CD4-positive, alpha-beta T cell (primary cell): ENCODE measurements at regions of chr12 and their contacts with region 1.

Region 1: DNA sequence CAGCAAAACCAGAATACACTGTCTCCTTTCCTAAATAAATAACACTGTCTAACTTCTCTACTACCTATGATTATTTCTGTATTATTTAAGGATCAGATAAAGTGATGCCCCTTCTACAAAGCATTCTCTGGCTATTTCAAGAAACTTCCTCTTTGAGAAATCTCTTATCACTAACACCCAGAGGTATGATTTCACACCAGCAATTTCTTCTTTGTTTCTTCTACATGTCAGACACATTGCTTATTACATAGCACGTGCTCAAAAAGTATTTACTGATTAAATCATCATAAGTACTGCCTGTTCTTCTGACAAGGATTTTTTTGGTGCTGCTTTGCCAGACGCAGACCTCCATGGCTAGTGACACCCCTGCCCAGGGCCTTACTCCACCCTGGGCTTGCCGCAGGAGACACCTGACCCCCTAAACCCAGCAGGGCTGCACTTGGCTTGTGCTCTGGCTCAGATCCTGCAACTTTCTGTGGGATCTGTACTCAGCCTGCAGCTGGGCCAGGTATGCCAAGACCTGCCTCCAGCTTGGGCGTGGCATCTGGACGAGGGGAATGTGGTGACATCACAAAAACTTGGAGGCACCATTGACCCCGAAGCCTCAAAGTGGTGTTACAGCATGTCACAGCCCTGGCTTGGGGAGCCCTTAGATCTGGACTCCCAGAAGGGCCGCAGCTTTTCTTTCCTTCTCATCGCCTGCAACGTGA is 15.4 kb upstream of the HIGD1C start:
- DNase-seq: no peak
- ATAC-seq: no peak
- H3K4me3 ChIP-seq: no peak overlapping the region
- H3K4me3 Mint-ChIP-seq: no peak overlapping the region
- H3K27ac ChIP-seq: no peak overlapping the region
- H3K27ac Mint-ChIP-seq: no peak overlapping the region
- H3K4me1 ChIP-seq: no peaks in the 10 kb centered on the region
- H3K4me1 Mint-ChIP-seq: no peaks in the 10 kb centered on the region
- H3K27me3 ChIP-seq: no peaks in the 10 kb centered on the region
- H3K27me3 Mint-ChIP-seq: no peaks in the 10 kb centered on the region
- CTCF ChIP-seq: no peak

Region 2: DNA sequence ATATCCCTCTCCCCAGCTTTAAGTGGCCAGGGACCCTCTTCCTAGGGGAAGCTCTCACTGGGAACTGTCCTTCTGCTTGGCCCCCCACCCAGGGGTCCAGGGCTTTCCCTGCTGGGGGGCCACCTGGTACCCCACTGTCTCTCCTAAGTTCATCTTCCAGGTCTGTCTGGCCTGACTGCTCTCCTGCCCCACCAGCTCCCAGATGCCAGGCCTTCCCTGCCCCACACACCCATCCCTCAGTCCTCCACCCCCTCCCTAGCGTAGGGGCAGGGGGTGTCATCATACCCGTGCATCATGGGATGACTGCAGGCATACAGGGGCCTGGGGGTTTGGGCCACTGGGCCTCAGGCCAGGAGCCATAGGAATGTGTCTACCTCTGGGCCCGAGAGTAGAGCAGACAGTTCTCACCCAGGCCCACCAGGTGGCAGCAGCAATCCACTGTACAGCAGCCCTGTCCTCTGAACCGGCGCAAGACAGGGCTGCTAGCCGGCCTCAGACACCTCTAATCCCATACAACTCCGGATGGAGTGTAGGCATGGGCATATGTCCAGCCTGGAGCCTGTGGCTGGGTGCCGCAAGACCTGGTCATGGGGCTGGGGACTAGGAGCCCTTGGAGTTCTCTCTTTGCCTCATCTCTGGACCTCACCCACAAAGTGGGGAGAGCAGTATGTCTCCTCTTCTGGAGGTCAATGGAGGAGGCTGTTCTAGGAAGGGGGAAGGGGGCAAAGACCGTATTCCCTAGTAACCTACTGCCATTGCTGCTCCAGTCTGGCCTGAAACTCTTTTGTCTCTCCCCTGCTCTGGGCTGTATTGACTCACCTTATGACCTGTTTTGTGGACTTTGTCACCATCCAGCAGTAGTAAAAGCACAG is 861.8 kb before region 1 on chr12:
- CTCF ChIA-PET with region 1: no interaction called
- POLR2A ChIA-PET with region 1: no interaction called
- intact Hi-C with region 1: no loop called
- DNase-seq: peak; percentile 63 to 88 (median 77)
- ATAC-seq: peak; percentile 95
- H3K4me3 ChIP-seq: no peak overlapping the region
- H3K4me3 Mint-ChIP-seq: no peak overlapping the region
- H3K27ac ChIP-seq: no peak overlapping the region
- H3K27ac Mint-ChIP-seq: no peak overlapping the region
- H3K4me1 ChIP-seq: peaks cover 13% of the 10 kb centered on the region
- H3K4me1 Mint-ChIP-seq: peaks cover 7% of the 10 kb centered on the region
- H3K27me3 ChIP-seq: no peaks in the 10 kb centered on the region
- H3K27me3 Mint-ChIP-seq: peaks cover 5% of the 10 kb centered on the region
- CTCF ChIP-seq: peak; percentile 82

Region 3: GRCh38 chr12:50625029-50625925 is 311.7 kb before region 1 on chr12:
- CTCF ChIA-PET with region 1: no interaction called
- POLR2A ChIA-PET with region 1: no interaction called
- intact Hi-C with region 1: no loop called
- DNase-seq: peak in 1 of 14 experiments; percentile 49
- ATAC-seq: peak; percentile 83
- H3K4me3 ChIP-seq: no peak overlapping the region
- H3K4me3 Mint-ChIP-seq: peak overlapping the region; percentile 26
- H3K27ac ChIP-seq: peak overlapping the region in 1 of 2 donors; percentile 2
- H3K27ac Mint-ChIP-seq: peak overlapping the region; percentile 50
- H3K4me1 ChIP-seq: peaks cover 30% of the 10 kb centered on the region
- H3K4me1 Mint-ChIP-seq: peaks cover 59% of the 10 kb centered on the region
- H3K27me3 ChIP-seq: no peaks in the 10 kb centered on the region
- H3K27me3 Mint-ChIP-seq: no peaks in the 10 kb centered on the region
- CTCF ChIP-seq: no peak

Region 4: DNA sequence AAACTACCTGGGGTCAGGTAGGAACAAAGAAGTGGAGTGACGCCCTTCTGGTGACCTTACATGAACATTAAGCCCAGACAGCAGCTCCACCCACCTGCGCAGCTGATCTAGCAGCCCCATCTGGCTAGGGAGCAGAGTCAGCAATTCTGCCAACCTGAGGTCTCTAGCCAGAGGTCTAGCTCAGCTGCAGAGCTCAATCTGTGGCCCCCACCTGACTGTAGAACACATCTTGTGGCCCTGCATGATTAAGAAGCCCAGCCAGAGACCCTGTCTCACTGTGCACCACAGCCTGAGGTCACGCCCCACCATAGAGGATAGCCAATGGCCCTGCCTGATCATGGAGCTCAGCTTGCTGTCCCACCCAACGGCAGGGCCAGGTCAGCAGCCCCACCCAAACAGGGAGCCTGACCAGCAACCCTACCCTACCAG is 35.3 kb before region 1 on chr12:
- CTCF ChIA-PET with region 1: no interaction called
- POLR2A ChIA-PET with region 1: no interaction called
- intact Hi-C with region 1: loop called in 1 of 2 experiments (anchors 1 kb)
- DNase-seq: no peak
- ATAC-seq: no peak
- H3K4me3 ChIP-seq: no peak overlapping the region
- H3K4me3 Mint-ChIP-seq: no peak overlapping the region
- H3K27ac ChIP-seq: no peak overlapping the region
- H3K27ac Mint-ChIP-seq: no peak overlapping the region
- H3K4me1 ChIP-seq: no peaks in the 10 kb centered on the region
- H3K4me1 Mint-ChIP-seq: no peaks in the 10 kb centered on the region
- H3K27me3 ChIP-seq: no peaks in the 10 kb centered on the region
- H3K27me3 Mint-ChIP-seq: no peaks in the 10 kb centered on the region
- CTCF ChIP-seq: no peak

Region 5: GRCh38 chr12:51505360-51506105 is 568.6 kb after region 1 on chr12:
- CTCF ChIA-PET with region 1: no interaction called
- POLR2A ChIA-PET with region 1: no interaction called
- intact Hi-C with region 1: no loop called
- DNase-seq: no peak
- ATAC-seq: no peak
- H3K4me3 ChIP-seq: no peak overlapping the region
- H3K4me3 Mint-ChIP-seq: no peak overlapping the region
- H3K27ac ChIP-seq: no peak overlapping the region
- H3K27ac Mint-ChIP-seq: no peak overlapping the region
- H3K4me1 ChIP-seq: no peaks in the 10 kb centered on the region
- H3K4me1 Mint-ChIP-seq: no peaks in the 10 kb centered on the region
- H3K27me3 ChIP-seq: no peaks in the 10 kb centered on the region
- H3K27me3 Mint-ChIP-seq: no peaks in the 10 kb centered on the region
- CTCF ChIP-seq: no peak